ENCODE measurements at regions of chr10 and their contacts with region 1.

Region 1: DNA sequence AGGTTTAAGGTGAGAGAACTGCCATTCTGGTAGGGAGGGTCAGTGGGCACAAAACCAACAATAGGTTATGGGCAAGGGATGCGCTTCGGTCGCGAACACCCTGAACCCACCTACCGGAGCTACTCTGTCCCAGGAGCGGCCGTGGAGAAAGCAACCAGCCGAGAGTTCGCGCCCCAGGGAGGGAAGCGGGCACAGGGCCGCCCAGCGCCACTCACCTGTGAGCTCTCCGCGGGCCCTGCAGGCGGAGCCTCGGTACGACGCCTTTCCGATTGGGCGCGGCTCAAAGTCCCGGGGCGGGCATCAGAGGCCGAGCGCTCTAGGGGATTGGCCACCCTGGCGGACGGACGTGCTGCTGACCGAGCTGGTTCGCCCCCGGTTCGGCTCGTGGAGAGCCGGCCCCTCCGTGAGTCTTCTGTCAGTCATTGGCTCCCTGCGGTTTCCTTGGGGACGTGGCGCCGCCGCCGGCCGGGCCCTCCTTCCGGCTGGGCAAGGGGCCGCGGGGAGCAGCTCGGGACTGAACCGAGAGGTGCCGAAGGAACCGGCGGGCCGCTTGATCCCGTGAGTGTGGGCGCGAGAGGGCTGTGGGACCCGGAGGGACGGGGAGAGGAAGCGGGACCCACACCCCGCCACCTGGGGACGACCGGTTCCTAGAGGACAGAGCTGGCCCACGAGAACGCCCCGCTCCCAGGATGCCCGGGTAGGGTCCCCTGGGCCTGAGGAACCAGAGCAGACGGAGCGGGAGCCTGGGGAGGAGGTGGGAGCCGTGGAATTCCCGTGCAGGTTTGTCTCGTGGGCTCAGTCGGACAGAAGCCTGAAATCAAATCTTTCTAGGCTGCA is at the start of gene ENTPD7:
- DNase-seq: peak; percentile 95
- ATAC-seq: peak; percentile 99
- H3K4me3 ChIP-seq: peak within 1 kb of the TSS; percentile 89 to 92
- H3K27ac ChIP-seq: peak within 1 kb of the TSS; percentile 51
- H3K4me1 ChIP-seq: peaks cover 6 to 30% of the 10 kb centered on the region in 2 experiments; a peak in 3 of 4 replicates
- H3K27me3 ChIP-seq: no peaks in the 10 kb centered on the region
- CTCF ChIP-seq: peak in 1 of 3 experiments; percentile 20; a peak in 1 of 6 replicates
- POLR2A ChIP-seq: peak; percentile 85
- RAD21 ChIP-seq: no peak
- total RNA-seq, gene ENTPD7: 12.3 TPM

Region 2: DNA sequence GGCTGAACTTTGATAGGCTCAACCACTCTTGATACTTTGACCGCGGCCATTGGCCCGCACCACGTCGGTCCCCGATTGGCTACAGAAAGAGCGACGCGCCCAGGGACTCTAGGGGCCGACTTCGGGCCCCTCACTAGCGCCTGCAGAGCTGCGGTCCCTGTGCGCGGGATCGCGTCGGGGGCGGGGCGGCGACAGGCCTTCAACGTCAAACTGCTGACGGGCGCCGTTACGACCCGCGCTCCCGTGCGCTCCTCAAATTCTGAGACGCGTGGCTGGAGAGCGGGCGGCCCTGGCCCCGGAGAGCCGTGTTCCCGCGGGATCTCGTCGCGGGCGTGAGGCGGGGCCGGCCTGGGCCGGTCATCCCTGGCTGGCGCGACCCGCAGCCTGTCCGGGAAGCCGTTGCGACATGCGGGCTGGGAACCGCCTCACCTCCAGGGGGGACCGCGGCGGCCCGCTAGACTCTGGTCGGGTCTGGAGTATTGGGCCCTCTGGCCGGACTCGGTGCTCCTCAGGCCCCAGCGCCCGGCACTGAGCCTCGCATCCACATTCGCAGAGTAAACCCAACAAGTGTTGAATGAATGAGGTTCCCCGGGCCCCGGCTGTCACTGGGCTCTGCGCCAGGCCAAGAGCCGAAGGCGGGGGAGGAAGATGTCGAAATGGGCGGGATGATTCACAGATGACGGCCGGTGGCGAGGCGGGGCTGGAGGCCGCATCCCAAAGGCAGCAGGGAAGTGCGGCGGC is 38.4 kb before region 1 on chr10:
- CTCF ChIA-PET with region 1: interaction called, 3 read pairs
- POLR2A ChIA-PET with region 1: interaction called, 18 read pairs
- RAD21 ChIA-PET with region 1: no interaction called
- intact Hi-C with region 1: loop called (anchors 1 kb)
- DNase-seq: peak; percentile 89
- ATAC-seq: peak; percentile 90
- H3K4me3 ChIP-seq: peak overlapping the region; percentile 63 to 73
- H3K27ac ChIP-seq: peak overlapping the region; percentile 96
- H3K4me1 ChIP-seq: peaks cover 17 to 34% of the 10 kb centered on the region in 2 experiments
- H3K27me3 ChIP-seq: no peaks in the 10 kb centered on the region
- CTCF ChIP-seq: peak in 1 of 3 experiments; percentile 7; a peak in 1 of 6 replicates
- POLR2A ChIP-seq: peak; percentile 56
- RAD21 ChIP-seq: no peak